ENCODE measurements at regions of chr18 and their contacts with region 1.

Region 1: DNA sequence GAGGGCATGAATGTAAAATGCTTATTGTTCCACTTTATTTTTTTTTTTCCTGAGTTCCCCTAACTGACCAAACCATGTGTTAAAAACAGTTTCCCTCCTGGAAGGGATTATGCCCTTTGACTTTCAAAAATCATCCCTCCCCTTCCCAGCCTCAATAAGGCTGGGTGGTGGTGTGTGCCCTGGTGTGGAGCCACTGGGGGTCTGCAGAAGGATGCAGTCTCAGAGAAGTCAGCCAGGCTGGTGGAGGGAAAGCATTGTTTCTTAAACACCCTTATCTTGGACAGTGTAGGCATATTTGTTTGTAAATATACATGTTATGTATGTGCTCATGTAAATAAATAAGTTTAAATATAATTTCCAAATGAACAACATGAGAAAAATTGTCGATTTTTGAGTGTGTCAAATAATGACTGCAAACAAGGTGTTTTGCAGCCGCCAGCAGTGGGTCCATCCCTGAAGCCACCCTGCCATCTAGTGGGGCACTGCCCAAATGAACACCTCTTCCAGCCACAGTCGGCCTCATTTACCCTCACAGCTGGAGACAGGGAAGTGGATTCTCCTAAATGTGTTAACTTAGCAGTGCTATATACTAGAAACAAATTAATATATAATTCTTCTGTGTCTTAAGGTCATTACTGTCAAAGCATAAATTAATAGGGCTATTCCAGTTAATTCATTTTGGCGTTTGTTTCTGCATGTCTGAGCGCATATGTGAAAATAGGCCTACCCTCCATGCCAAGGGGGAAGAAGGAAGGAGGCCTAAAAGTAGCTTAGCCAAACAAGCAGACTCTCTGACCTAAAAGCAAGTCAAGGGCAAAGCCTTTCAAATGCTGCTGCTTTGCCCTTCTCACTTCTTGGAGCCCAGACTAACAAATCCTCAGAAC is 209.6 kb upstream of the PIK3C3 start:
- DNase-seq: peak; percentile 21
- ATAC-seq: peak; percentile 99
- H3K4me3 ChIP-seq: no peak overlapping the region
- H3K27ac ChIP-seq: no peak overlapping the region
- H3K4me1 ChIP-seq: no peaks in the 10 kb centered on the region
- H3K27me3 ChIP-seq: no peaks in the 10 kb centered on the region; a peak in 1 of 5 replicates
- CTCF ChIP-seq: peak; percentile 76
- EP300 ChIP-seq: no peak
- POLR2A ChIP-seq: no peak
- RAD21 ChIP-seq: peak; percentile 35; the same call in 1 of the 2 replicates

Region 2: DNA sequence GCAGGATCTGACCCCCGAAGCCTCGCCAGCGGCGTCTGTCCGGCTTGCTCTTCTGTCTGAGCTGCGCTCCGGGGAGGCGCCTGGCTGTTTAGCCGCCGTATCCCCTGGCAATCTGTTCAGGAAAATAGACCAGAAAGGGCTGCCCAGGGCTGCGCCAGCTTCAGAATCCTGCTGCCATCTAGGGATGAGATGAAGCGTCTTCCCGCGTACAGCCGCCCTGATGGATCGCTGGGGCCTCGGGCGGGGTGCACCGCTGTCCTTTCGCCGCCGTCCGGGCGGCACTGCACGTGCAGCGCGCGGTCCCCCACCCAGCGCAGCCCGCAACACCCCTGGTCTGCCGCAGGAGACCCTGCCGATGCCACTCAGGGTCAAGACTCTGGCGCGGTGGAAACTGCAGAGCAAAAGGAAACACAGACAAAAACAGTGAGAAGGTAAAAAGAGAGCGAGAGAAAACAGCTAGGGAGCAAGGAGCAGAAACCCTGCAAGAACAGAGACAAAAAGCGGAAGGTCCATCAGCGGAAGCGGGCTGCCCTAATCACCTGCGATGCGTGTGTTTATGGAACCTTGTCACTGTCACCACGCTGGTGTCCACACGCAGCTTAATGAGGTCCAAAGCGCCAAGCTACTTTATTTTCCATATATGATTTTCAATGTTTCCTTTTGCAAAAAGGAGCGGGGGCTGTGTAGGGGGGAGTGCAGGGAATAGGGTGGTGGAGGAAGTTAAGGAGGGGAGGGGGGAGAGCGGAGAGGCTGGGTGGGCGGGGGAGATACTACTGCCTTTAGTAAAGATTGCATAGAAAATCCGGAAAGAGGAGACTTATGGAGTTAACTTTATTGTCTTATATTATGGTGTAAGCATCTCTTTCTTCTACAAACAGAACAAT is 1903.7 kb before region 1 on chr18:
- CTCF ChIA-PET with region 1: no interaction called
- POLR2A ChIA-PET with region 1: no interaction called
- in situ Hi-C with region 1: no loop called
- intact Hi-C with region 1: loop called (anchors 10 kb)
- DNase-seq: peak; percentile 60
- ATAC-seq: peak; percentile 100
- H3K4me3 ChIP-seq: peak overlapping the region; percentile 48 to 66 (median 50)
- H3K27ac ChIP-seq: no peak overlapping the region
- H3K4me1 ChIP-seq: peaks cover 15% of the 10 kb centered on the region
- H3K27me3 ChIP-seq: peaks cover 2 to 15% of the 10 kb centered on the region in 2 experiments; a peak in 3 of 5 replicates
- CTCF ChIP-seq: peak; percentile 84
- EP300 ChIP-seq: no peak
- POLR2A ChIP-seq: no peak
- RAD21 ChIP-seq: peak; percentile 78

Region 3: DNA sequence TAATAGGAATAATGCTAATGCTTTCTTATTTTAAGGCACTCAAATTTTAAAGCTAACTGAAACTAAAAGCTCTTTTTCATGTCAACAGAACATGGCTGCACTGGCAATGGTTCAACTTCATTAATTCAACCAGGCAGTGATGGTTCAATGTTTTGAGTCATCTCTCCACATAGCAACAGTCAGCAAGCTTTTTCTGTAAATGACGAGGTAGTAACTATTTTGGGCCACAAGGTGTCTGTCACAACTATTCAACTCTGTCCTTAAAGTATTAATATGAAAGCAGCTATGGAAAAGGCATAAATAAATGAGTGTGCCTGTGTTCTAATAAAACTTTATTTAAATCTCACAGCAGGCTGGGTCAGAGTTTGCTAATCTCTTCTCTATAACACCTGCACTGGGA is 1215.9 kb before region 1 on chr18:
- CTCF ChIA-PET with region 1: no interaction called
- POLR2A ChIA-PET with region 1: no interaction called
- in situ Hi-C with region 1: no loop called
- intact Hi-C with region 1: loop called (anchors 5 kb)
- DNase-seq: peak; percentile 1
- ATAC-seq: peak; percentile 46; the same call in 1 of the 3 replicates
- H3K4me3 ChIP-seq: no peak overlapping the region
- H3K27ac ChIP-seq: no peak overlapping the region
- H3K4me1 ChIP-seq: no peaks in the 10 kb centered on the region
- H3K27me3 ChIP-seq: no peaks in the 10 kb centered on the region
- CTCF ChIP-seq: no peak
- EP300 ChIP-seq: no peak
- POLR2A ChIP-seq: no peak
- RAD21 ChIP-seq: no peak

Region 4: GRCh38 chr18:40935423-40935822 is 810.0 kb before region 1 on chr18:
- CTCF ChIA-PET with region 1: interaction called, 3 read pairs
- POLR2A ChIA-PET with region 1: no interaction called
- in situ Hi-C with region 1: loop called (anchors 25 kb)
- intact Hi-C with region 1: no loop called
- DNase-seq: peak; percentile 35
- ATAC-seq: no peak
- H3K4me3 ChIP-seq: no peak overlapping the region
- H3K27ac ChIP-seq: no peak overlapping the region
- H3K4me1 ChIP-seq: no peaks in the 10 kb centered on the region
- H3K27me3 ChIP-seq: no peaks in the 10 kb centered on the region; a peak in 1 of 5 replicates
- CTCF ChIP-seq: peak; percentile 29; the same call in 1 of the 2 replicates
- EP300 ChIP-seq: no peak
- POLR2A ChIP-seq: no peak
- RAD21 ChIP-seq: no peak

Region 5: GRCh38 chr18:41378598-41378997 is 366.8 kb before region 1 on chr18:
- CTCF ChIA-PET with region 1: no interaction called
- POLR2A ChIA-PET with region 1: no interaction called
- in situ Hi-C with region 1: no loop called
- intact Hi-C with region 1: loop called (anchors 10 kb)
- DNase-seq: no peak
- ATAC-seq: peak; percentile 60
- H3K4me3 ChIP-seq: no peak overlapping the region
- H3K27ac ChIP-seq: no peak overlapping the region
- H3K4me1 ChIP-seq: no peaks in the 10 kb centered on the region
- H3K27me3 ChIP-seq: no peaks in the 10 kb centered on the region
- CTCF ChIP-seq: peak; percentile 43
- EP300 ChIP-seq: no peak
- POLR2A ChIP-seq: no peak
- RAD21 ChIP-seq: no peak

Region 6: DNA sequence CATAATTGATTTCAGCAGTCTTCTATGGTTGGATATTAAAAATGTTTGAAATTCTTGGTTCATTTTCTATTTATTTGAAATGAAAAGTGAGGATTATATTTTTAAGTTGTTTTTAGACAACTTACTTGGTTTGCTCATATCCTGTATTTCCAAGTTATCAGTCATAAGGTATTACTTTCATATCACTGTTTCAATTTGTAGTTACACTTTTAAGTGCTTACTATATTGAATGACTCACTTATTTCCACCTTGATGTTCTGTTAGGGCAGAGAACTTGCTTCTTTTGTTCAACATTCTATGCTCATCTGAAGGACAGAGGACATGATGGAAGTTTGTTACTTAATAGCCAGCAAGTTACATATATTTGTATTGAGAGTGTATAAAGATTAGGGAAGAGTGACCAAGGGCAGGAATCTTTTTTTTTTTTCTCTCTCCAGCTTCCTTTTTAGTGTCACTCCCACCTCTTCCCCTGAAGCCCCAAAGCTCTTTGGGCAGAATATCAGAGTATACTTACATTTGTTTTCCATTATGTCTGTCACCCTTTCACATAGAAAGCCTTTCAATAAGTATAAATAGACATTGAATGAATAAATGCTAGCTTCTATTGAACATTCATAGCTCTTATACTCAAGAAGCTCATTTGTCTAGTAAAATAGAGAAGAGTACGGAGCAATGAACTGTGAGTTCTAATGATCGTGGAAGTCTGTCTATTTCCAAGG is 237.7 kb after region 1 on chr18:
- CTCF ChIA-PET with region 1: no interaction called
- POLR2A ChIA-PET with region 1: no interaction called
- in situ Hi-C with region 1: no loop called
- intact Hi-C with region 1: no loop called
- DNase-seq: no peak
- ATAC-seq: no peak
- H3K4me3 ChIP-seq: no peak overlapping the region
- H3K27ac ChIP-seq: no peak overlapping the region
- H3K4me1 ChIP-seq: no peaks in the 10 kb centered on the region
- H3K27me3 ChIP-seq: no peaks in the 10 kb centered on the region
- CTCF ChIP-seq: no peak
- EP300 ChIP-seq: no peak
- POLR2A ChIP-seq: no peak
- RAD21 ChIP-seq: no peak